ENCODE measurements at regions of chr5 and their contacts with region 1.

Region 1: DNA sequence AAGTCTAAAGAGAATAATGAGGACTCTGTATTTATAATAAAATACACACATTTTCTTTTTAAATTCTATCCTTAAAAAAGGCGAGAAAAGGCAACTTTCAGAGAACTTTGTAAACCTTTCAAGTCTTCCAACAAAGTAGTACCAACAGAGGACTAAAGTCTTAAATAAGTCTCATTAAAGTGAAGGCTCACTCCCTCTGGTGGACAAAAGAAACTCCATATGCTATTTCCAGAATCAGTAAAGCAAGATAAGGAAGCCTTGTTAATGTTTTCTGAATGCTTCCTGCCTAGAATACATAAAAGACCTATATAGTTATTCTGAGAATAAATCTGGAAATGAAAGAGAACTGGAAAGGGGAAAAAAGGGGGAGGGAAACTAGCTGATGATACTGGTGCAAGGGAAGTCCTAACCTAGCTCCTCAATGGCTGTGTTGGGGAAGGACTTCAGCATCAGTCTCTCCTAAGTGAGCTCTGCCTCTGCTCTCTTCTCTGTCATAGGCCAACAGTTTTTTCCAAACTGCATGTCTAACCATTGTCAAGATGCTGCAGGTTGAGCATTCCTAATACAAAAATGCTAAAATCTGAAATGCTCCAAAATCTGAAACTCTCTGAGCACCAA is 7.2 kb downstream of the HMGCS1 start:
- DNase-seq: peak; percentile 30
- ATAC-seq: peak; percentile 72
- H3K4me3 ChIP-seq: peak overlapping the region; percentile 27; the same call in 1 of the 2 replicates
- H3K27ac ChIP-seq: no peak overlapping the region
- H3K4me1 ChIP-seq: peaks cover 4% of the 10 kb centered on the region; the same call in 1 of the 2 replicates
- H3K27me3 ChIP-seq: no peaks in the 10 kb centered on the region
- CTCF ChIP-seq: peak; percentile 56 to 69 (median 67)
- EP300 ChIP-seq: no peak
- POLR2A ChIP-seq: no peak
- RAD21 ChIP-seq: peak; percentile 77

Region 2: GRCh38 chr5:42680046-42680445 is 626.0 kb before region 1 on chr5:
- CTCF ChIA-PET with region 1: no interaction called
- POLR2A ChIA-PET with region 1: no interaction called
- RAD21 ChIA-PET with region 1: no interaction called
- SMC1A ChIA-PET with region 1: no interaction called
- in situ Hi-C with region 1: no loop called
- intact Hi-C with region 1: no loop called
- DNase-seq: no peak
- ATAC-seq: no peak
- H3K4me3 ChIP-seq: no peak overlapping the region
- H3K27ac ChIP-seq: no peak overlapping the region
- H3K4me1 ChIP-seq: no peaks in the 10 kb centered on the region
- H3K27me3 ChIP-seq: no peaks in the 10 kb centered on the region
- CTCF ChIP-seq: no peak
- EP300 ChIP-seq: no peak
- POLR2A ChIP-seq: no peak
- RAD21 ChIP-seq: no peak

Region 3: DNA sequence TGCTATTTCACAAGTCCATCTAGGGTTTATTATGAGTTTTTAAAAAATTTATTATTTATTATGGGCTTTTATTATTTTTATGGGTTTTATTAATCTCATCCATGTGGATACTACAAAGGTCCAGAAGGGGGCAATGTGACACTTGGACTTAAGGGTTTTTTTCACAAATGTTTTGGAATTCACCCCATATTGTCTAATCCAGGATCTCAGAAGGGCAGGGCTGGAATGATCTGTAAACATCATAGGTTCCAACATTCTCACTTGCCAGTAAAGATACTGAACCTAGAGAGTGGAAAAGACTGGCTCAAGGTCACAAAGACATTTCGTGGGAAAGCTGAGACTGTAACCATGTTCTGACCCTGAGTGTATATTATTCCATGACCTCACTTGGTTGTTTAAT is 78.4 kb before region 1 on chr5:
- CTCF ChIA-PET with region 1: interaction called, 25 read pairs
- POLR2A ChIA-PET with region 1: interaction called, 6 read pairs
- RAD21 ChIA-PET with region 1: interaction called, 8 read pairs
- SMC1A ChIA-PET with region 1: interaction called, 5 read pairs
- in situ Hi-C with region 1: no loop called
- intact Hi-C with region 1: loop called (anchors 1 kb)
- DNase-seq: no peak
- ATAC-seq: peak; percentile 18; the same call in 1 of the 3 replicates
- H3K4me3 ChIP-seq: no peak overlapping the region
- H3K27ac ChIP-seq: no peak overlapping the region
- H3K4me1 ChIP-seq: no peaks in the 10 kb centered on the region
- H3K27me3 ChIP-seq: no peaks in the 10 kb centered on the region
- CTCF ChIP-seq: peak; percentile 17 to 50 (median 22); a peak in 4 of 6 replicates
- EP300 ChIP-seq: no peak
- POLR2A ChIP-seq: no peak
- RAD21 ChIP-seq: peak; percentile 72

Region 4: GRCh38 chr5:43294226-43294625 is 11.8 kb before region 1 on chr5:
- CTCF ChIA-PET with region 1: interaction called, 11 read pairs
- POLR2A ChIA-PET with region 1: no interaction called
- RAD21 ChIA-PET with region 1: no interaction called
- SMC1A ChIA-PET with region 1: interaction called, 7 read pairs
- in situ Hi-C with region 1: no loop called
- intact Hi-C with region 1: no loop called
- DNase-seq: no peak
- ATAC-seq: no peak
- H3K4me3 ChIP-seq: no peak overlapping the region
- H3K27ac ChIP-seq: no peak overlapping the region
- H3K4me1 ChIP-seq: no peaks in the 10 kb centered on the region
- H3K27me3 ChIP-seq: no peaks in the 10 kb centered on the region
- CTCF ChIP-seq: no peak
- EP300 ChIP-seq: no peak
- POLR2A ChIP-seq: no peak
- RAD21 ChIP-seq: no peak